Endothelial cell of umbilical vein (primary cell): ENCODE measurements at regions of chr2 and their contacts with region 1.

Region 1: DNA sequence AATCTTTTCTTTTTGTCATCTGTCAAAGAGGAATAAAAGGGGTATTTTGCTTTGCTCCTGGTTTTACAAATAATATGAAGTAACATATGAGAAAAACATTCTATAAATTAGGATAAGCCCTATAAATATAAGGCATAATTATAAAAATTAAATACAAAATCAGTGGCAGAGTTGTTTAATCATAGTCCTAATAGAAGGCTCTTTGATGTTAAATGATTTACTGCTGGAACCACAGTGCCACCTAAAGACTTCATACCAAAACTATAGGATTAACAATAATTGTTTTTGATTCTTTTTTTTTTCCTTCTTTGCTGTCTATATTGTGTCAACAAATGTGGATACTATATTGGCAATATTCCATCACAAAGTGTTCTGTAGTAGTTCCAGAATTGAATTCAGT is 837.7 kb upstream of the SLC39A10 start:
- DNase-seq: peak; percentile 51
- H3K4me3 ChIP-seq: no peak overlapping the region
- H3K27ac ChIP-seq: no peak overlapping the region
- H3K4me1 ChIP-seq: peaks cover 10% of the 10 kb centered on the region
- H3K27me3 ChIP-seq: no peaks in the 10 kb centered on the region
- CTCF ChIP-seq: peak; percentile 17 to 21
- POLR2A ChIP-seq: no peak

Region 2: DNA sequence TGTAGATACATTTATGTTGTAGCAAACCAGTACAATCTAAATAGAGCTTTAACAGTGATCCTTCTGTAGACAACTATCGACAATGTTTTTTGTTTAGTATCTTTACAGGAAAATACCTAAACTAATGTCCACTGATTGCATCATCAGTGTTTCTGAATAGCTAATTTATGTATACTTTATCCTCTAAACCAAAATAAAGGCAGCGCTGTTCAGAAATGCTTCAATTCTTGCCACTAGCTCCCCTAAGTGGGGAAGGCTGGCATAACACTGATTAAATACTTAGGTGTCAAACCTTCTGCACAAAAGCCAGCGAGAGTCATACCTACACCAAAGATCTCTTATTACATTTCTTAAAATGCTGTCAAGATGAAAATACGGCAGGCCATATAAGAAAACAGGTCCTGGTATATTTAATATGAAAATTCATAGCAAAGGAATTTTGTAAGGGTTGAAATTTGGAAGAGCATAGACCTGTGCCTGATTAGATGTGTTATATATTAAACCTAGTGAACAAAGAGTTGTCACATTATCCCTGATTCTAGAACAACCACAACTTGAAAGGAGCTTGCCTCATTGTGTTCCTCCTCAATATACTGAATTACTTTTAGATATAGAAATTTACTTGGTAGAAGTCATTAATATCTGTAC is 855.7 kb before region 1 on chr2:
- CTCF ChIA-PET with region 1: no interaction called
- POLR2A ChIA-PET with region 1: no interaction called
- dilution Hi-C with region 1: no loop called
- intact Hi-C with region 1: loop called (anchors 5 kb)
- DNase-seq: peak; percentile 65
- H3K4me3 ChIP-seq: no peak overlapping the region
- H3K27ac ChIP-seq: no peak overlapping the region
- H3K4me1 ChIP-seq: no peaks in the 10 kb centered on the region
- H3K27me3 ChIP-seq: no peaks in the 10 kb centered on the region
- CTCF ChIP-seq: peak; percentile 50 to 55
- POLR2A ChIP-seq: no peak

Region 3: DNA sequence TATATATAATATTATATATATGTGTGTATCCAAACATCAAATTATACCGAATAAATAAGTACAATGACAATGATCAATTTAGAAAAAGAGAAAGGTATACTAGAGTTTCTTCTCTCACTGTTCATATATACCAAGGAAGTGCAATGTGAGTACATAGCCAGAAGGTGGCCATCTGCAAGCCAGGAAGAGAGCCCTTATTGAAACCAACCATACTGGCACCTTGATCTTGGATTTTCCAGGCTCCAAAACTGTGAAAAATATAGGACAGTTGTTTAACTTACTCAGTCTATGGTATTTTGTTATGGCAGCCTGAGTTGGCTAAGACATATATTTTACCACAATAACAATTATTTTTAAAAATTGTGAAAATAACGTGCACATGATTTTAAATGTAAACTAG is 652.5 kb before region 1 on chr2:
- CTCF ChIA-PET with region 1: no interaction called
- POLR2A ChIA-PET with region 1: no interaction called
- dilution Hi-C with region 1: no loop called
- intact Hi-C with region 1: loop called (anchors 1 kb)
- DNase-seq: peak; percentile 6
- H3K4me3 ChIP-seq: no peak overlapping the region
- H3K27ac ChIP-seq: no peak overlapping the region
- H3K4me1 ChIP-seq: no peaks in the 10 kb centered on the region
- H3K27me3 ChIP-seq: no peaks in the 10 kb centered on the region
- CTCF ChIP-seq: peak; percentile 27 to 38
- POLR2A ChIP-seq: no peak

Region 4: DNA sequence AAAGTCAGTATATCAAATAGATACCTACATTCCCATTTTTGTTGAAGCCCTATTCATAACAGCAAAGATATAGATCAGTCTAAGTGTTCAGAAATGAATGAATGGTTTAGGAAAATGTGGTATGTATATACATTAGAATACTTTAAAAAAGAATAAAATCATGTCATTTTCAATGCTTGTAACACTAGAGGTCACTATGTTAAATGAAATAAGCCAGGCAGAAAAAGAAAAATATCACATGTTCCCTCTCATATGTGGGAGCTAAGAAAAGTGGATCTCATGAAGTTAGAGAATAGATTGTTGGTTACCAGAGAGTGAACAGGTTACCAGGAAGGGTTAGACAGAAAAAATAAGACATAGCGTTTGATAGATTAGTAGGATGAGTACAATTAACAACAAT is 273.4 kb before region 1 on chr2:
- CTCF ChIA-PET with region 1: interaction called, 9 read pairs
- POLR2A ChIA-PET with region 1: no interaction called
- dilution Hi-C with region 1: no loop called
- intact Hi-C with region 1: loop called (anchors 1 kb)
- DNase-seq: peak; percentile 40
- H3K4me3 ChIP-seq: no peak overlapping the region
- H3K27ac ChIP-seq: no peak overlapping the region
- H3K4me1 ChIP-seq: peaks cover 2% of the 10 kb centered on the region
- H3K27me3 ChIP-seq: no peaks in the 10 kb centered on the region
- CTCF ChIP-seq: peak in 1 of 2 donors; percentile 6
- POLR2A ChIP-seq: no peak

Region 5: DNA sequence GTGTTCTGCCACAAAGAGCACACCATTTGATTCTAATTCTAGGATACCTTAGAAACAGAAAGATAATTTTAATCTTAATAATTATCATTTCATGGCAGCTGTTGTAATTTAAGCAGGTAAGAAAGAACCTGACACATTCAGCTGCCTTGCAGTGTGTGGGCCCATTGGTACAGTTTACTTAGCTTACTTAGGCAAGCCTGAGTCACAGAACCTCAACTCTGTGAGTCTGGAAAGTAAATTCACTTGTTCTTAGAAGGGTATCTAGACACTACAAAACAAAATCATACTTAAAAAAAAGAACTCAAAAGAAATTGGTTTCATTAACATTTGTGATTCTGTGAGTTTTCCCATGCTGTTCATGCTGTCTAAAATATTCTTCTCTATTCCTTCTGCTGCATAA is 118.6 kb before region 1 on chr2:
- CTCF ChIA-PET with region 1: no interaction called
- POLR2A ChIA-PET with region 1: no interaction called
- dilution Hi-C with region 1: no loop called
- intact Hi-C with region 1: loop called (anchors 5 kb)
- DNase-seq: peak; percentile 52
- H3K4me3 ChIP-seq: no peak overlapping the region
- H3K27ac ChIP-seq: peak overlapping the region; percentile 55
- H3K4me1 ChIP-seq: peaks cover 46% of the 10 kb centered on the region
- H3K27me3 ChIP-seq: no peaks in the 10 kb centered on the region
- CTCF ChIP-seq: no peak
- POLR2A ChIP-seq: no peak